ENCODE measurements at regions of chr3 and their contacts with region 1.

Region 1: DNA sequence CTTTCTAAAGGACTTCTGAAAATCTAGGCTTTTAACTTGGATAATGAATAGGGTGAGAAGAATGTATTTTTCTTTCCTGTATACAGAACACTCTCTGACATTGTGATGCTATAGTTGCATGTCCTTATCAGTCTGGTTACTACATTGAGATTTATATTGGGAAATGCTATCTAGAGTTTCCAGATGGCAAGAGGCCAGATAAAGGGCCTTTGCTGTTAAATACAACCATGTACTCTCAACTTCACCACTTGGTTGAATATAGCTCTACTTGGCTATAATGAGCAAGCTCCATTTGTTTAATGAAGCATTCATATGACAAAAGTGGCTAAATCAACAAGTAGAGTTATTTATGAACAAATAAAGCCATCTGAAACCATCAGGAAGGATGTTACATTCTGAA is 91.0 kb downstream of the IGSF11 start:
- DNase-seq: no peak
- H3K4me3 ChIP-seq: no peak overlapping the region
- H3K4me3 Mint-ChIP-seq: no peak overlapping the region
- H3K27ac ChIP-seq: no peak overlapping the region
- H3K27ac Mint-ChIP-seq: no peak overlapping the region
- H3K4me1 ChIP-seq: peaks cover 25% of the 10 kb centered on the region
- H3K4me1 Mint-ChIP-seq: peaks cover 17 to 41% (median 29%) of the 10 kb centered on the region in 4 donors
- H3K27me3 ChIP-seq: no peaks in the 10 kb centered on the region
- H3K27me3 Mint-ChIP-seq: peaks cover 0 to 1% of the 10 kb centered on the region in 2 donors

Region 2: GRCh38 chr3:118984699-118985098 is 41.1 kb after region 1 on chr3:
- CTCF ChIA-PET with region 1: no interaction called
- POLR2A ChIA-PET with region 1: no interaction called
- intact Hi-C with region 1: loop called (anchors 5 kb)
- DNase-seq: no peak
- H3K4me3 ChIP-seq: no peak overlapping the region
- H3K4me3 Mint-ChIP-seq: no peak overlapping the region
- H3K27ac ChIP-seq: no peak overlapping the region
- H3K27ac Mint-ChIP-seq: no peak overlapping the region
- H3K4me1 ChIP-seq: no peaks in the 10 kb centered on the region
- H3K4me1 Mint-ChIP-seq: peaks cover 0 to 1% (median 0%) of the 10 kb centered on the region in 4 donors
- H3K27me3 ChIP-seq: no peaks in the 10 kb centered on the region
- H3K27me3 Mint-ChIP-seq: peaks cover 0 to 10% of the 10 kb centered on the region in 2 donors